GM13976 (cell line): ENCODE measurements at regions of chr2 and their contacts with region 1.

Region 1: GRCh38 chr2:37672104-37672869 is 845 bp upstream of the CDC42EP3 start:
- DNase-seq: peak; percentile 83
- CTCF ChIP-seq: no peak

Region 2: DNA sequence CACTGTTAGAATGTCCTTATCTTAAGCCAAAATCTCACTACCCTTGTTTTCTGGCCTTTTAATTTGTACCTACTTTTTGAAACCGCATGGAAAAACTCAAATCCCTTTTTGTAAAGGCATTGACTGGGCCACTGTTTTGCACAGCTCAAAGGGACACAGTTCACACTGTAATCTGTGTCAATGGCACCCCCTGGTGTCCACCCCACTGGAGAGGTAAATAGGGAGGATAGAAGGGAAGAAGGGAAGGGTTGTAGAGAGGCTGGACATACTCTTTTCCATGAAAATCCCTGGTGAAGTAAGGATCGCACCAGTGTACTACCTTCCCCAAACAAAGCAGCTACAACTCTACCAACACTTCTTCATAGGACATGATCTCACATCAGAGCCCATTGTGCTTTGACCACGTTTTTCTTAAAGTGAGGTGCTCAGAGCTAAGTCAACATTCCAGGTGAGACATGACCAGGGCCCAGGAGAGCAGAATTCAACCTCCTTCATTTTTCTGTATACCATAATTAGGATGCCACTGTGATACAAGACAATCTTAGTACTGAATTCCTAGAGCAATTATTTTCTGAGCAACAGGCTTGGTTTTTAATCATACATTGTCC is 160.4 kb after region 1 on chr2:
- in situ Hi-C with region 1: loop called (anchors 10 kb)
- DNase-seq: peak; percentile 68
- CTCF ChIP-seq: peak; percentile 78